ENCODE measurements at regions of chr5 and their contacts with region 1.

Region 1: DNA sequence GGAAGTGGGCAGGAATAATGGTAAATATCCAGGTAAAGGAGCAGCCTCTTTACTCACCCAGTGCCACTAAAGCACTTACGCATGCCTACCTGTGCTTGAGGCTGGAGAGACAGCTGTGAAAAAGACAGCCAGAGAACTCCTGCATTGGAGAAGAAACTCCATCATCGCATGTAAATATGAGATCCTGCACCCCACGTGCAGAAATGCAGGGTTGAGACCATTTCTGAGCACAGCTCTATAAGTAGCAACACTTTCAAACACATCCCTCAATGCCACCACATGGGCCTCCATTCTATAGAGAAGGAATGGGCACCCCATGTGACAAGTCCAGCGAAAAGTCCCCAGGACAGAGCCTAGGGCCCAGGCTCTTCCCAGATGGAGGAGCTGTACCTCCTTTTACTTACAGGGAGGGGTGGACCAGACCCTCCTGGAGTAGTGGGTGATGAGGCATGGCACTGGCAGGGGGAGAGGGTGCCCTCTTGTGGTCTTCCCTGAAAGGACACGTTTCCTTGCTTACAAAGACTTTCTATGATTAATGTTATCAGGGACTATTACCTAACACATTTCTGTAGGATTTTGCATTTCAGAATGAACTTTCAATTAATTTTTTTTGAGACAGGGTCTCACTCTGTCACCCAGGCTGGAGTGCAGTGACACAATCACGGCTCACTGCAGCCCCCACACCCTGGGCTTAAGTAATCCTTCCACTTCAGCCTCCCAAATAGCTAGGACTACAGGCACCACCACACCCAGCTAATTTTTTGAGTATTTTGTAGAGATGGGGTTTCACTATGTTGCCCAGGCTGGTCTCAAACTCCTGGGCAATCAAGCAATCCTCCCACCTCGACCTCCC is 55.3 kb upstream of the IL17B start:
- DNase-seq: peak; percentile 76
- ATAC-seq: peak; percentile 78
- H3K4me3 Mint-ChIP-seq: no peak overlapping the region
- H3K27ac Mint-ChIP-seq: no peak overlapping the region
- H3K4me1 Mint-ChIP-seq: peaks cover 9% of the 10 kb centered on the region
- H3K27me3 Mint-ChIP-seq: peaks cover 1% of the 10 kb centered on the region
- CTCF ChIP-seq: peak; percentile 91

Region 2: GRCh38 chr5:149317281-149318048 is 116.9 kb before region 1 on chr5:
- CTCF ChIA-PET with region 1: interaction called, 34 read pairs
- POLR2A ChIA-PET with region 1: no interaction called
- intact Hi-C with region 1: loop called (anchors 10 kb)
- DNase-seq: peak; percentile 59
- ATAC-seq: peak; percentile 69
- H3K4me3 Mint-ChIP-seq: no peak overlapping the region
- H3K27ac Mint-ChIP-seq: no peak overlapping the region
- H3K4me1 Mint-ChIP-seq: no peaks in the 10 kb centered on the region
- H3K27me3 Mint-ChIP-seq: no peaks in the 10 kb centered on the region
- CTCF ChIP-seq: peak; percentile 72

Region 3: GRCh38 chr5:149381987-149382340 is 52.4 kb before region 1 on chr5:
- CTCF ChIA-PET with region 1: interaction called, 42 read pairs
- POLR2A ChIA-PET with region 1: no interaction called
- intact Hi-C with region 1: loop called (anchors 5 kb)
- DNase-seq: peak; percentile 80
- ATAC-seq: peak; percentile 93
- H3K4me3 Mint-ChIP-seq: no peak overlapping the region
- H3K27ac Mint-ChIP-seq: no peak overlapping the region
- H3K4me1 Mint-ChIP-seq: peaks cover 4% of the 10 kb centered on the region
- H3K27me3 Mint-ChIP-seq: no peaks in the 10 kb centered on the region
- CTCF ChIP-seq: peak; percentile 80

Region 4: GRCh38 chr5:149422366-149423048 is 11.9 kb before region 1 on chr5:
- CTCF ChIA-PET with region 1: interaction called, 13 read pairs
- POLR2A ChIA-PET with region 1: interaction called, 3 read pairs
- intact Hi-C with region 1: no loop called
- DNase-seq: no peak
- ATAC-seq: peak; percentile 53
- H3K4me3 Mint-ChIP-seq: no peak overlapping the region
- H3K27ac Mint-ChIP-seq: no peak overlapping the region
- H3K4me1 Mint-ChIP-seq: no peaks in the 10 kb centered on the region
- H3K27me3 Mint-ChIP-seq: no peaks in the 10 kb centered on the region
- CTCF ChIP-seq: no peak

Region 5: DNA sequence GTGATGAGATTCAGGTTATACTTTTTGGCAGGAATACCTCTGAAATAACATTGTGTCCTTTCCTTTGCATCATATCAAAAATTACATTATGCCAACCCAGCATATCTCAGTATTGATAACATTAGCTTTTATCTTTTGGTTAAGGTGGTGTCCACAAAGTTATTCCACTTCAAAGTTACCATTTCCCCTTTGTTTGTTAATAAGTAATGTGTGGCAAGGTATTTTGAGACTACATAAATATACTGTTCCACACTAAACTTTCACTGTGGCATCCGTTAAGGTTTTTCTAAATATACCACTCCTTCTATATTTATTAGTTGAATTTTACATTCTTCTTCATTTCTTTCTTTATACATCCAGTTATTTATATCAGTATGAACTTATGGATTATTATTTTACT is 132.8 kb after region 1 on chr5:
- CTCF ChIA-PET with region 1: interaction called, 71 read pairs
- POLR2A ChIA-PET with region 1: no interaction called
- intact Hi-C with region 1: no loop called
- DNase-seq: no peak
- ATAC-seq: no peak
- H3K4me3 Mint-ChIP-seq: no peak overlapping the region
- H3K27ac Mint-ChIP-seq: no peak overlapping the region
- H3K4me1 Mint-ChIP-seq: peaks cover 13% of the 10 kb centered on the region
- H3K27me3 Mint-ChIP-seq: no peaks in the 10 kb centered on the region
- CTCF ChIP-seq: no peak

Measured in activated CD8-positive, alpha-beta T cell treated with anti-CD3 and anti-CD28 coated beads for 36 hours (primary cell).